Left ventricle myocardium inferior (tissue), 1 donor: ENCODE measurements at regions of chr10 and their contacts with region 1.

Region 1: GRCh38 chr10:21510241-21511074 is 15.0 kb downstream of the SKIDA1 start:
- DNase-seq: no peak
- H3K4me3 ChIP-seq: peak overlapping the region; percentile 66
- H3K27ac ChIP-seq: peak overlapping the region; percentile 46
- H3K4me1 ChIP-seq: peaks cover 33% of the 10 kb centered on the region
- H3K27me3 ChIP-seq: peaks cover 5% of the 10 kb centered on the region
- CTCF ChIP-seq: no peak

Region 2: DNA sequence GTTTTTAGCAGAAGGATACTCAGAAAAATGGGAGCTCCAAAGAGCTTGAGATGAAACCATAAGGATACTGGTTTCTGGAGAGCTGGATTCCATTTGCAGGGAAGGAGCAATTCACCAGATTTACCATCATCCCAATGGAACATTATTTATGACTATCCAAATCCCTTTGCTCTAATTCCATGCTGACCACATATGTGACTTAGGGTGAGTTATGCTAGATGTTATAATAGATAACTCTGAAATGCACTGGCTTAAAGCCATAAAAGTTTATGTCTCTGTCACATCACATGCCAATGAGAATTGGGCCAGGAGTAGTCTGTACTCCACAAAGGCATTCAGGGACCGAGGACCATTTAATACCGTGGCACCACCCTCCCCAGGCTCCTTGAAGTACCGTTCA is 170.1 kb before region 1 on chr10:
- intact Hi-C with region 1: no loop called
- DNase-seq: no peak
- H3K4me3 ChIP-seq: no peak overlapping the region
- H3K27ac ChIP-seq: no peak overlapping the region
- H3K4me1 ChIP-seq: peaks cover 20% of the 10 kb centered on the region
- H3K27me3 ChIP-seq: no peaks in the 10 kb centered on the region
- CTCF ChIP-seq: no peak

Region 3: GRCh38 chr10:21732067-21732772 is 221.8 kb after region 1 on chr10:
- intact Hi-C with region 1: loop called (anchors 5 kb)
- DNase-seq: peak; percentile 62
- H3K4me3 ChIP-seq: no peak overlapping the region
- H3K27ac ChIP-seq: no peak overlapping the region
- H3K4me1 ChIP-seq: no peaks in the 10 kb centered on the region
- H3K27me3 ChIP-seq: no peaks in the 10 kb centered on the region
- CTCF ChIP-seq: peak; percentile 95